CD8-positive, alpha-beta T cell (primary cell): ENCODE measurements at regions of chr2 and their contacts with region 1.

Region 1: DNA sequence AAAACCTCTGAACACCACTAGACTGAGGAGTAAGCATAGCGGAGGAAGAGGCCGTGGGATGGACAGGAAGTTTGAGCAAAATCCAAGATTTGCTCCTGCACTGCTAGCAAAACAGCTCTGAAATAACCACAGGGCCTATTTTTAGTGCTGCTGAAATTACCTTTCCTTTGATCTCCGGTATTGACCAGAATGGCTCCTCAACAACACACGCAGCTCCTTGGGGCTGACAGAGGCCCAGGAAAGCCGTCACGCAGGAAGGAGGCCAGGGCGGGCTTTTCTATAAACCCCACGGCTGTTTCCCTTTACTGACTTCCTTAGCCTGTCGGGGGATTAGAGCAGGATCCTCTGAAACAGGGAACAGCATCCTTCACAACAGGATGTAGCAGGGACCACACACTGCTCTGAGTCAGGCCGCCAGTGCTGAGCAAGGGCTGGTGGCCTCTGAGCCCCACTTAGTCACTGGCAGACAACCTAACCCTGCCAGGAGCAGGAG is 80.8 kb upstream of the LCLAT1 start:
- DNase-seq: peak in 6 of 9 experiments; percentile 25 to 68 (median 37)
- ATAC-seq: peak; percentile 70
- H3K4me3 ChIP-seq: no peak overlapping the region
- H3K4me3 Mint-ChIP-seq: no peak overlapping the region
- H3K27ac ChIP-seq: no peak overlapping the region
- H3K27ac Mint-ChIP-seq: peak overlapping the region; percentile 19
- H3K4me1 ChIP-seq: peaks cover 33% of the 10 kb centered on the region
- H3K4me1 Mint-ChIP-seq: peaks cover 49% of the 10 kb centered on the region
- H3K27me3 ChIP-seq: no peaks in the 10 kb centered on the region
- H3K27me3 Mint-ChIP-seq: no peaks in the 10 kb centered on the region
- CTCF ChIP-seq: no peak

Region 2: DNA sequence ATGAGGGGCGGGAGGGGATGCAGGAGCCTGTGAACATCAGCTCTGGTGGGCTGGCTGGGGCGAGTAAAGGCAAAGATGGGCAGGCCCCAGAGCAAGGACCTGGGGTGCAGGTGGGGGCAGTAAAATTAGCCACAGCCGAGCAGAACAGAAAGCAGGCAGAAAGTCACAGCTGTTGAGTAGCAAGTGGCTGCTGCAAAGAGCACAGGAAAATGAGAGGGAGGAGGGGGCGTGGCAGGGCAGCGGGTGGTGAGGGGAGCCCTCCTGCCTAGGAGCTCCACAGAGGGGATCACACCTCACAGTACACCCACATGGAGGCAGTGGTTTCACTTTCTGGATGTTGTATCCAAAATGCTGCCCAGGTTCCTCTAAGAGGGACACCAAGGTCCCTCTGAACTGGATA is 55.3 kb before region 1 on chr2:
- CTCF ChIA-PET with region 1: no interaction called
- POLR2A ChIA-PET with region 1: no interaction called
- intact Hi-C with region 1: loop called in 1 of 2 experiments (anchors 10 kb)
- DNase-seq: peak in 1 of 9 experiments; percentile 30
- ATAC-seq: peak; percentile 25
- H3K4me3 ChIP-seq: no peak overlapping the region
- H3K4me3 Mint-ChIP-seq: peak overlapping the region; percentile 9
- H3K27ac ChIP-seq: no peak overlapping the region
- H3K27ac Mint-ChIP-seq: peak overlapping the region; percentile 67
- H3K4me1 ChIP-seq: peaks cover 35% of the 10 kb centered on the region
- H3K4me1 Mint-ChIP-seq: peaks cover 47% of the 10 kb centered on the region
- H3K27me3 ChIP-seq: no peaks in the 10 kb centered on the region
- H3K27me3 Mint-ChIP-seq: no peaks in the 10 kb centered on the region
- CTCF ChIP-seq: no peak

Region 3: DNA sequence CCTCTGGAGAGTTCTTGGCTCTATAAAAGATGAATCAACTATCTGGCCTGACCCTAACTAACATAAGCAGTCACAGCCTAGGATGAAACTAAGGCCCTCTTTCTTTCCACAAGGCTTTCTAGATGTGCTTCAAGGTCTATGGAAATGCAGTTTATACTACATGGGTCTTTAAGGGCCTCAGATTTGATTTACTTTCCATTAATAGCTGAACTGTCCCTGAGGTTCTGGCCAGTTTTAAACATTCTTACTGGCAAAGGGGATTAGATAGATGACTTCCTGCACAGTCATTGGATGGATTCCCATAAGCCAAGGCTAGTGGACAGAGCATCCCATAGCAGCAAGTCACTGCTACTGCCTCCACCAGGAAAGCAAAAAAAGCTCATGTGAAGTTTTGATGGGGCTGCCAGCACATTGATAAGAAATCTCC is 42.7 kb after region 1 on chr2:
- CTCF ChIA-PET with region 1: interaction called, 3 read pairs
- POLR2A ChIA-PET with region 1: no interaction called
- intact Hi-C with region 1: loop called in 1 of 2 experiments (anchors 5 kb)
- DNase-seq: no peak
- ATAC-seq: no peak
- H3K4me3 ChIP-seq: no peak overlapping the region
- H3K4me3 Mint-ChIP-seq: no peak overlapping the region
- H3K27ac ChIP-seq: no peak overlapping the region
- H3K27ac Mint-ChIP-seq: no peak overlapping the region
- H3K4me1 ChIP-seq: peaks cover 30% of the 10 kb centered on the region
- H3K4me1 Mint-ChIP-seq: peaks cover 45% of the 10 kb centered on the region
- H3K27me3 ChIP-seq: no peaks in the 10 kb centered on the region
- H3K27me3 Mint-ChIP-seq: no peaks in the 10 kb centered on the region
- CTCF ChIP-seq: no peak